CD8-positive, alpha-beta T cell (primary cell): ENCODE measurements at regions of chr6 and their contacts with region 1.

Region 1: DNA sequence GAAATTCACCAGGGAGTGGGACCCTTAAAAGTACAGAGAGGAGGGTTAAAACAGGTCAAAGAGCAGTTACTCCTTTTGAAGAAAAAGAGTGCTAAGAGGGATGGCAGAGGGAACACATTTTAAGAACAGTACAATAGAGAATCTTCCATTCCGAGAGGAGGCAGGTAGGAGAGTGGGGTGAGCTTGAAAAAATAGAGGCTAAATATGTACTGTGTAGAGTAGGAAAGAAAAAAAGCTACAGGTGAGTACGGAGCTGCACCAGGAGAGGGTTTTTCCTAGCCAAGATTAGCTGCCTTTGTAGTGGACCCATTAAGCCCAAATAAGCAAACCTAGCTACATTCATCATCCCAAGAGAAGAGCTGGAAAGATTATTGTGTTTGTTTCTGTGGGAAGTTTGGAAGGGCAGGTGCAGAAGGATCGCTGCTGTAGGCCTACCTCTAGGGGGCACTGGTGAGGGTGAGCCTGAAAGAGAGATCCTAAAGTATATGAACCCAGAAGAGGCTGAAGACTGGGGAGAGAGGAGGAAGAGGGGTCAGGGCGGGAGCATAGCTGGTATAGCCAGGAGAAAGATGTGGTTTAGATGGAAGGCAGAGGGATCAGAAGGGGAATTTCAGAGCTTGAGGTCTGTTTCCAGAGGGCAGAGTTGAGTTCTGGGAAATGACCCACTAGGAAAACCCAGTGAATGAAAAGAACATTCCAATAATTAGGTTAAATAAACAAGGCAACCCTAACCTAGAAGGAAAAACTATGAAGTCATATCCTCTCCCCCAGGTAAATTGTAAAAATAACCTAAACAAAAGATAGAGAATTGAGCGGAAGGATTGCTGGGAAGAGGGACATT is 50.2 kb upstream of the HINT3 start:
- DNase-seq: peak in 7 of 9 experiments; percentile 13 to 63 (median 43)
- ATAC-seq: peak; percentile 71
- H3K4me3 ChIP-seq: no peak overlapping the region
- H3K4me3 Mint-ChIP-seq: no peak overlapping the region
- H3K27ac ChIP-seq: no peak overlapping the region
- H3K27ac Mint-ChIP-seq: no peak overlapping the region
- H3K4me1 ChIP-seq: no peaks in the 10 kb centered on the region
- H3K4me1 Mint-ChIP-seq: peaks cover 2% of the 10 kb centered on the region
- H3K27me3 ChIP-seq: no peaks in the 10 kb centered on the region
- H3K27me3 Mint-ChIP-seq: no peaks in the 10 kb centered on the region
- CTCF ChIP-seq: peak; percentile 60

Region 2: DNA sequence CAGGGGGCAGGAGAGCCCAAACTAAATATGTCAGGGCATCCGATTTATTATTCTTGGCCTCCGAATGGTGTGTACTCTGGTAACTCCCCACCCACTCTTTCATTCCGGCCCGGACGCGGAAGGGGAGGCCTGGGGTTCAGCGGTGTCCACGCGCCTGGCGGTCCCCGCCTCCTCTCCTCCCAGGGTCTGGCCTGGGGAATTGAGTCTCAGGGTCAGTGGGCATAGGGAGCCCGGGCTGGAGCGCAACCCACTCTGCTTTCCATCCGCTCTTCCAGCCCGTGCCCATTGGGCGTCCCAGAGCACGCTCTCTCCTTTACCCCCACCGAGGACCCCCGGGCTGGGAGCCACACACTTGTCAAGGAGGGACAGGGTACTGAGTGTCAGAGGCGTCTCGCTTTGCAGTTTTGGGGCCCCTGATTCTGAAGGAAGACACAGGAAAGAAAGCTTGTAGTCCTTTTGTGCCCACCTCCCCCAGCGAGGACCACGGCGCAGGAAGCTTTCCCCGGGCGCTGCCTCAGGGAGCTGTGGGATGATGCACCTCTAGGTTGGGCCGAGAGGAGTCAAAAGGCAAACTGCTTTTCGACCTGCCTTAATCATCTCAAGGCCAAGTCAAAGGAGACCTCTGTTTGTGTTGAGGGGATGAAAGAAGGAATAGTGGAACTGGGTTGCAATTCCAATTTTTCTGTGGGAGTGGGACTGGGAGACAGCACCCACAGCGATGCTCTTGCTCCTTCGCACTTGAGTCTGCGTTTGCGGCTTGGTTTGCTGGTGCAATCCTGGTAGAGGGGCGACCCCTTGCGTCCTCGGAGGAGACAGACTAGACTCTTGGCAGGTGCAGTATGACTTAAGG is 1214.6 kb after region 1 on chr6:
- CTCF ChIA-PET with region 1: no interaction called
- POLR2A ChIA-PET with region 1: no interaction called
- intact Hi-C with region 1: loop called in 1 of 2 experiments (anchors 5 kb)
- DNase-seq: peak in 8 of 9 experiments; percentile 12 to 59 (median 45)
- ATAC-seq: peak; percentile 36
- H3K4me3 ChIP-seq: no peak overlapping the region
- H3K4me3 Mint-ChIP-seq: peak overlapping the region; percentile 54
- H3K27ac ChIP-seq: no peak overlapping the region
- H3K27ac Mint-ChIP-seq: no peak overlapping the region
- H3K4me1 ChIP-seq: peaks cover 16% of the 10 kb centered on the region
- H3K4me1 Mint-ChIP-seq: peaks cover 17% of the 10 kb centered on the region
- H3K27me3 ChIP-seq: peaks cover 6 to 15% of the 10 kb centered on the region in 2 experiments
- H3K27me3 Mint-ChIP-seq: peaks cover 46% of the 10 kb centered on the region
- CTCF ChIP-seq: peak; percentile 25